IMR-90 (cell line): ENCODE measurements at regions of chr16 and their contacts with region 1.

Region 1: GRCh38 chr16:66830422-66831404 is at the start of gene NAE1:
- DNase-seq: peak; percentile 81
- ATAC-seq: peak; percentile 99
- H3K4me3 ChIP-seq: peak within 1 kb of the TSS; percentile 75
- H3K27ac ChIP-seq: peak within 1 kb of the TSS; percentile 57
- H3K4me1 ChIP-seq: peaks cover 12% of the 10 kb centered on the region
- H3K27me3 ChIP-seq: no peaks in the 10 kb centered on the region
- CTCF ChIP-seq: peak; percentile 98
- POLR2A ChIP-seq: peak; percentile 77
- RAD21 ChIP-seq: peak; percentile 54
- total RNA-seq, gene NAE1: 36.7 and 49.4 TPM in 2 replicates

Region 2: DNA sequence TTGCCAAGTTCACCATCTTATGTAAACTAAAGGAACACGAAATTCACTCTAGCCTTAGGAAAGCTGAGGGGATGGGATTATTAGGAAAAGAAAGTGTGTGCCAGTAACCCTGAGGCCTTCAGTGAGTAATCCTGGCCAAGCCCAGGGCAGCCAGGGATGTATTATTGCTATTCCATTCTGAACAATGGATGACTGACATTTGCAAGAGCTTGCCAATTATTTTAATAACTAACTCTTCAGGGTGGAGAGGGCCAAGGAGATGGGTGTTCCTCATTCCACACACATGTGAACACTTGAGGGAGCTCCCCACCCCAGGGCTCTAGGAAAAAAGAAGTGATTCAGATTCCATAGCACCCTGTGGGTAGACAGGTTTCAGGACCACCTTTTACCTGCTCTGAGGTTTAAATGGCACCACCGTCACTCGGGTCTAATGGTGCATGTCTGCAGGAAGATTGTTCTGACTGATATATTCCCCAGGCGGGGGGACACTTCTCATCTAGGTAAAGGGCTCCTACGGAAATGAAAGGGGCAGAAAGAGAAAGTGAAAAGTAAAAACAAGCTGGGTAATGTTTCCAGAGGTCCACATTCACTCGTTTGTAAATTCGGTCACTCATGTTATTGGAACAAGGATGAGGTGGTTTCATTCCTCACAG is 322.3 kb before region 1 on chr16:
- CTCF ChIA-PET with region 1: no interaction called
- POLR2A ChIA-PET with region 1: no interaction called
- dilution Hi-C with region 1: no loop called
- in situ Hi-C with region 1: no loop called
- intact Hi-C with region 1: no loop called
- DNase-seq: no peak
- ATAC-seq: no peak
- H3K4me3 ChIP-seq: no peak overlapping the region
- H3K27ac ChIP-seq: no peak overlapping the region
- H3K4me1 ChIP-seq: peaks cover 19% of the 10 kb centered on the region
- H3K27me3 ChIP-seq: no peaks in the 10 kb centered on the region
- CTCF ChIP-seq: no peak
- POLR2A ChIP-seq: no peak
- RAD21 ChIP-seq: no peak

Region 3: DNA sequence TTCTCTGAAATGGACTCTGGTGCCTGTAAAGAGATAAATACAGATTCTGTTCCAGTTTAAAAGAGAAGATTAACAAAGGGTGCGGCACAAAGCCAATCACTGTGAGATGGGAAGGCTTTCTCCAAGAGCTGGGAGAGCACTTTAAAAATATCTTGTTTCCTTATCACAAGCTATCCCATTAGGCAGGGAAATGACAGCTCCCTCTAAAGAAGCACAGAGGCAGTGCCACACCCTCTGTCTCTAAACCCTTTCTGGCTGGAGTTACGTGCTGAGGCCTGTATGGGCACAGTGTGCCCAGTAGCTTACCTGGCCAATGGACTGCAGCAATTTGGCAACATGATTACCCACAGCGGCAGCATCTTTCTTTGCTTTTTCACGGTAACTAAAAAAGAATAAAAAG is 20.3 kb before region 1 on chr16:
- CTCF ChIA-PET with region 1: interaction called, 11 read pairs
- POLR2A ChIA-PET with region 1: interaction called, 3 read pairs
- dilution Hi-C with region 1: no loop called
- in situ Hi-C with region 1: no loop called
- intact Hi-C with region 1: no loop called
- DNase-seq: no peak
- ATAC-seq: no peak
- H3K4me3 ChIP-seq: no peak overlapping the region
- H3K27ac ChIP-seq: no peak overlapping the region
- H3K4me1 ChIP-seq: no peaks in the 10 kb centered on the region
- H3K27me3 ChIP-seq: no peaks in the 10 kb centered on the region
- CTCF ChIP-seq: no peak
- POLR2A ChIP-seq: no peak
- RAD21 ChIP-seq: no peak

Region 4: DNA sequence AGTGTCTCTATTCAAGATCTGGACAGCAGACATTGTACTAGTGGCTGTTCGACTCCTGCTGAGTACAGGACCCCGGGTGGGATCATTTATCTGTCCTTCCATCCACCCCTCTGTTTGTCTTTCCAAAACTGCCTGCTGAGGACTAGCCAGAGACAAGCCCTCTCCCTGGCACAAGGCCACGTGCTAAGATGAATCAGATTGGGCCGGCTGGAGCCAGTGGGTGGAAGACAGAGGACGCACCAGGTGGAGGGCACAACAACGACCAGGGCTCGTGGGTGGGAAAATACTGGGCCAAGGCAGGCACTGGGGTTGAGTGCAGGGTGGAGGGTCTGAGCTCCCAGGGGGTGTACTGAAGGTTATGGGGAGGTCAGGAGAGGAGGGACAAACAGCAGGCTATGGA is 12.1 kb after region 1 on chr16:
- CTCF ChIA-PET with region 1: interaction called, 13 read pairs
- POLR2A ChIA-PET with region 1: interaction called, 5 read pairs
- dilution Hi-C with region 1: no loop called
- in situ Hi-C with region 1: no loop called
- intact Hi-C with region 1: no loop called
- DNase-seq: peak; percentile 19
- ATAC-seq: peak; percentile 33; the same call in 1 of the 2 replicates
- H3K4me3 ChIP-seq: no peak overlapping the region
- H3K27ac ChIP-seq: no peak overlapping the region
- H3K4me1 ChIP-seq: no peaks in the 10 kb centered on the region; the same call in 1 of the 2 replicates
- H3K27me3 ChIP-seq: peaks cover 68% of the 10 kb centered on the region
- CTCF ChIP-seq: no peak
- POLR2A ChIP-seq: no peak
- RAD21 ChIP-seq: no peak

Region 5: GRCh38 chr16:67173808-67174705 is 343.3 kb after region 1 on chr16:
- CTCF ChIA-PET with region 1: no interaction called
- POLR2A ChIA-PET with region 1: no interaction called
- dilution Hi-C with region 1: no loop called
- in situ Hi-C with region 1: no loop called
- intact Hi-C with region 1: no loop called
- DNase-seq: peak; percentile 76
- ATAC-seq: peak; percentile 73
- H3K4me3 ChIP-seq: peak overlapping the region; percentile 36
- H3K27ac ChIP-seq: peak overlapping the region; percentile 36; the same call in 1 of the 2 replicates
- H3K4me1 ChIP-seq: peaks cover 35% of the 10 kb centered on the region
- H3K27me3 ChIP-seq: no peaks in the 10 kb centered on the region
- CTCF ChIP-seq: peak; percentile 38
- POLR2A ChIP-seq: no peak
- RAD21 ChIP-seq: no peak